Activated CD8-positive, alpha-beta T cell treated with anti-CD3 and anti-CD28 coated beads, Interleukin-2, amount 10 ng/mL, durations not matched to agents 7 days and 5 days (primary cell): ENCODE measurements at regions of chr1 and their contacts with region 1.

Region 1: GRCh38 chr1:179728271-179728670 is 14.8 kb upstream of the FAM163A start:
- DNase-seq: no peak
- ATAC-seq: no peak
- H3K4me3 Mint-ChIP-seq: no peak overlapping the region
- H3K27ac Mint-ChIP-seq: no peak overlapping the region
- H3K4me1 Mint-ChIP-seq: no peaks in the 10 kb centered on the region
- H3K27me3 Mint-ChIP-seq: peaks cover 11% of the 10 kb centered on the region

Region 2: GRCh38 chr1:179706339-179706941 is 21.8 kb before region 1 on chr1:
- CTCF ChIA-PET with region 1: interaction called, 14 read pairs
- POLR2A ChIA-PET with region 1: no interaction called
- DNase-seq: peak; percentile 71
- ATAC-seq: no peak
- H3K4me3 Mint-ChIP-seq: no peak overlapping the region
- H3K27ac Mint-ChIP-seq: no peak overlapping the region
- H3K4me1 Mint-ChIP-seq: peaks cover 6% of the 10 kb centered on the region
- H3K27me3 Mint-ChIP-seq: peaks cover 4% of the 10 kb centered on the region